GM12878 (cell line): ENCODE measurements at regions of chr5 and their contacts with region 1.

Region 1: GRCh38 chr5:40688127-40688761 is 8.5 kb downstream of the PTGER4 start:
- DNase-seq: peak; percentile 62
- ATAC-seq: peak; percentile 93
- H3K4me3 ChIP-seq: no peak overlapping the region
- H3K27ac ChIP-seq: no peak overlapping the region
- H3K4me1 ChIP-seq: no peaks in the 10 kb centered on the region
- H3K27me3 ChIP-seq: no peaks in the 10 kb centered on the region
- CTCF ChIP-seq: peak; percentile 74 to 86 (median 81)
- EP300 ChIP-seq: no peak
- POLR2A ChIP-seq: no peak
- RAD21 ChIP-seq: peak; percentile 99

Region 2: GRCh38 chr5:39599721-39600431 is 1088.4 kb before region 1 on chr5:
- CTCF ChIA-PET with region 1: no interaction called
- POLR2A ChIA-PET with region 1: no interaction called
- RAD21 ChIA-PET with region 1: interaction called, 6 read pairs
- SMC1A ChIA-PET with region 1: interaction called, 4 read pairs
- in situ Hi-C with region 1: loop called (anchors 25 kb)
- intact Hi-C with region 1: loop called (anchors 1 kb)
- DNase-seq: no peak
- ATAC-seq: no peak
- H3K4me3 ChIP-seq: no peak overlapping the region
- H3K27ac ChIP-seq: no peak overlapping the region
- H3K4me1 ChIP-seq: no peaks in the 10 kb centered on the region
- H3K27me3 ChIP-seq: peaks cover 0 to 2% of the 10 kb centered on the region in 2 experiments; a peak in 1 of 4 replicates
- CTCF ChIP-seq: peak; percentile 24 to 49 (median 48); a peak in 3 of 6 replicates
- EP300 ChIP-seq: no peak
- POLR2A ChIP-seq: no peak
- RAD21 ChIP-seq: peak; percentile 49

Region 3: GRCh38 chr5:39948867-39949468 is 739.3 kb before region 1 on chr5:
- CTCF ChIA-PET with region 1: interaction called, 40 read pairs
- POLR2A ChIA-PET with region 1: no interaction called
- RAD21 ChIA-PET with region 1: interaction called, 21 read pairs
- SMC1A ChIA-PET with region 1: interaction called, 41 read pairs
- in situ Hi-C with region 1: loop called (anchors 5 kb)
- intact Hi-C with region 1: loop called (anchors 1 kb)
- DNase-seq: peak; percentile 7
- ATAC-seq: peak; percentile 97
- H3K4me3 ChIP-seq: no peak overlapping the region
- H3K27ac ChIP-seq: no peak overlapping the region
- H3K4me1 ChIP-seq: no peaks in the 10 kb centered on the region
- H3K27me3 ChIP-seq: no peaks in the 10 kb centered on the region
- CTCF ChIP-seq: peak; percentile 55 to 69 (median 59)
- EP300 ChIP-seq: no peak
- POLR2A ChIP-seq: no peak
- RAD21 ChIP-seq: peak; percentile 85

Region 4: GRCh38 chr5:40160435-40161110 is 527.7 kb before region 1 on chr5:
- CTCF ChIA-PET with region 1: interaction called, 3 read pairs
- POLR2A ChIA-PET with region 1: no interaction called
- RAD21 ChIA-PET with region 1: interaction called, 7 read pairs
- SMC1A ChIA-PET with region 1: no interaction called
- in situ Hi-C with region 1: no loop called
- intact Hi-C with region 1: loop called (anchors 5 kb)
- DNase-seq: no peak
- ATAC-seq: no peak
- H3K4me3 ChIP-seq: no peak overlapping the region
- H3K27ac ChIP-seq: no peak overlapping the region
- H3K4me1 ChIP-seq: no peaks in the 10 kb centered on the region
- H3K27me3 ChIP-seq: no peaks in the 10 kb centered on the region
- CTCF ChIP-seq: no peak
- EP300 ChIP-seq: no peak
- POLR2A ChIP-seq: no peak
- RAD21 ChIP-seq: no peak

Region 5: DNA sequence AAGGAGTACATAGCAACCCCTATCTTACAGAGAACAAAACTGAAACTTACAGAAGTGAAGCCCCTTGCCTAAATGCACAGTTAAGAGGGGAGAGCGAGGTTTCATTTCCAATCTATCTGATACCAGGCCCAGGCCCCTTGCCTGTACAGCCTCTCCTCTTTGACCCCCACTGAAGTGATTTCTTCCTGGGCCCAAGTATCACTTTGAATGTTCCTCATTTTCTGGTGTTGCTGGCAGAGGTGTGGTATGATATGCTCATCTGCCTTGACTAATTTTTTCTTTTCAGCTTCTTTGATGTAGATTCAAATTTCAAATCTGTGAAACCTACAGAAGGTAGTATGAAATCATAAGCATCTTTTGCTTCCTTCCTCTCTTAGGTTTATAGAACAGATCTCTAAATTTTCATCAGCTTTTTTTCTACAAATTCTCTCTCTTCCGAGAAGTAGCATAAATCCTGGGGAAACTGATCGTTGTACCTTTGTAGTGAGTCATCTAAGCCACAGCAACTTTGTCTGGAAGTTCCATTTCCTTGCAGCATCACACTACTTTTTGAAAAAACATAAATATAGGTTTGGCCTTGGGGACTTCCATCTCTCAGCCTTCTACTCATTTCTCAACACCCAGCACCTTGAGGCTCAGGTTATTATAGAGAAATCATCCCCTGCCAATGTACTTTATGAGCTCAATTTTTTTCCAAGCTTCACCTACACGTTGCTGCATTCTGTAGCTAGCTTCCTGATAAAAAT is 410.9 kb before region 1 on chr5:
- CTCF ChIA-PET with region 1: no interaction called
- POLR2A ChIA-PET with region 1: no interaction called
- RAD21 ChIA-PET with region 1: no interaction called
- SMC1A ChIA-PET with region 1: no interaction called
- in situ Hi-C with region 1: no loop called
- intact Hi-C with region 1: loop called (anchors 10 kb)
- DNase-seq: peak; percentile 34
- ATAC-seq: peak; percentile 91
- H3K4me3 ChIP-seq: no peak overlapping the region
- H3K27ac ChIP-seq: no peak overlapping the region
- H3K4me1 ChIP-seq: peaks cover 2% of the 10 kb centered on the region; the same call in 1 of the 2 replicates
- H3K27me3 ChIP-seq: peaks cover 2 to 3% of the 10 kb centered on the region in 2 experiments; a peak in 1 of 4 replicates
- CTCF ChIP-seq: no peak
- EP300 ChIP-seq: no peak
- POLR2A ChIP-seq: no peak
- RAD21 ChIP-seq: no peak

Region 6: GRCh38 chr5:40714001-40714400 is 25.8 kb after region 1 on chr5:
- CTCF ChIA-PET with region 1: interaction called, 5 read pairs
- POLR2A ChIA-PET with region 1: no interaction called
- RAD21 ChIA-PET with region 1: interaction called, 3 read pairs
- SMC1A ChIA-PET with region 1: interaction called, 15 read pairs
- in situ Hi-C with region 1: no loop called
- intact Hi-C with region 1: no loop called
- DNase-seq: no peak
- ATAC-seq: no peak
- H3K4me3 ChIP-seq: no peak overlapping the region
- H3K27ac ChIP-seq: no peak overlapping the region
- H3K4me1 ChIP-seq: no peaks in the 10 kb centered on the region
- H3K27me3 ChIP-seq: no peaks in the 10 kb centered on the region
- CTCF ChIP-seq: no peak
- EP300 ChIP-seq: no peak
- POLR2A ChIP-seq: no peak
- RAD21 ChIP-seq: no peak

Region 7: GRCh38 chr5:40823459-40823858 is 135.2 kb after region 1 on chr5:
- CTCF ChIA-PET with region 1: no interaction called
- POLR2A ChIA-PET with region 1: no interaction called
- RAD21 ChIA-PET with region 1: no interaction called
- SMC1A ChIA-PET with region 1: no interaction called
- in situ Hi-C with region 1: no loop called
- intact Hi-C with region 1: no loop called
- DNase-seq: no peak
- ATAC-seq: peak; percentile 6; the same call in 2 of the 3 replicates
- H3K4me3 ChIP-seq: no peak overlapping the region
- H3K27ac ChIP-seq: no peak overlapping the region
- H3K4me1 ChIP-seq: no peaks in the 10 kb centered on the region
- H3K27me3 ChIP-seq: no peaks in the 10 kb centered on the region
- CTCF ChIP-seq: no peak
- EP300 ChIP-seq: no peak
- POLR2A ChIP-seq: no peak
- RAD21 ChIP-seq: no peak

Region 8: GRCh38 chr5:40879163-40879942 is 191.1 kb after region 1 on chr5:
- CTCF ChIA-PET with region 1: interaction called, 3 read pairs
- POLR2A ChIA-PET with region 1: no interaction called
- RAD21 ChIA-PET with region 1: no interaction called
- SMC1A ChIA-PET with region 1: interaction called, 3 read pairs
- in situ Hi-C with region 1: no loop called
- intact Hi-C with region 1: loop called (anchors 5 kb)
- DNase-seq: no peak
- ATAC-seq: peak; percentile 67
- H3K4me3 ChIP-seq: no peak overlapping the region
- H3K27ac ChIP-seq: no peak overlapping the region
- H3K4me1 ChIP-seq: no peaks in the 10 kb centered on the region
- H3K27me3 ChIP-seq: no peaks in the 10 kb centered on the region
- CTCF ChIP-seq: peak; percentile 6 to 48 (median 46); a peak in 4 of 6 replicates
- EP300 ChIP-seq: no peak
- POLR2A ChIP-seq: no peak
- RAD21 ChIP-seq: peak; percentile 45; the same call in 1 of the 2 replicates